ENCODE measurements at regions of chr20 and their contacts with region 1.

Region 1: GRCh38 chr20:14055127-14055742 is 59.9 kb downstream of the MACROD2 start:
- DNase-seq: peak in 1 of 2 experiments; percentile 15
- H3K4me3 ChIP-seq: no peak overlapping the region
- H3K27ac ChIP-seq: no peak overlapping the region
- H3K4me1 ChIP-seq: no peaks in the 10 kb centered on the region
- H3K27me3 ChIP-seq: no peaks in the 10 kb centered on the region
- CTCF ChIP-seq: peak; percentile 72

Region 2: DNA sequence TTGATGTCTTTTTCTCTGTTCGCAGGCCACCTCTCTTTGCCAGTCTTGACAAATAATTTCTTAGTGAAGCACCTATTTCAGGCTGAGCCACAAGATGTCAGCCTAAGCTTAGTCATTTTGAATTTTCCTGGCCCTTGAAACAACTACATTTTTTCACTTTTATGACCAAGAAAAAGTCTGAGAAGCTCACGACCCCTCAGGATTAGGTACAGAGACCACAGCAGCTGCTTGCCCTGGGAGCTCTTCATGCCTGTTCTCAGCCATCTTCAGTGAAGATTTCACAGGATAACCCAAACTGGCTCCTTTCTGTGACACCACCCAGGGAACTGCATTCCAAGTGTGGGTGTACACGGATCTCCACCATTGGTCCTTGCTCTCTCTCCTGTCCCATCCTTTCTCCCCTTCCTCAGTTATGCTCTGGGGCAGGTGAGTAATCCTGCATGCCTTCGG is 1084.8 kb before region 1 on chr20:
- CTCF ChIA-PET with region 1: no interaction called
- POLR2A ChIA-PET with region 1: no interaction called
- intact Hi-C with region 1: loop called (anchors 10 kb)
- DNase-seq: no peak
- H3K4me3 ChIP-seq: no peak overlapping the region
- H3K27ac ChIP-seq: no peak overlapping the region
- H3K4me1 ChIP-seq: no peaks in the 10 kb centered on the region
- H3K27me3 ChIP-seq: no peaks in the 10 kb centered on the region
- CTCF ChIP-seq: peak; percentile 63

Region 3: GRCh38 chr20:13119583-13119982 is 935.7 kb before region 1 on chr20:
- CTCF ChIA-PET with region 1: no interaction called
- POLR2A ChIA-PET with region 1: no interaction called
- intact Hi-C with region 1: loop called (anchors 10 kb)
- DNase-seq: peak in 1 of 2 experiments; percentile 20
- H3K4me3 ChIP-seq: no peak overlapping the region
- H3K27ac ChIP-seq: no peak overlapping the region
- H3K4me1 ChIP-seq: no peaks in the 10 kb centered on the region
- H3K27me3 ChIP-seq: no peaks in the 10 kb centered on the region
- CTCF ChIP-seq: peak; percentile 91

Region 4: DNA sequence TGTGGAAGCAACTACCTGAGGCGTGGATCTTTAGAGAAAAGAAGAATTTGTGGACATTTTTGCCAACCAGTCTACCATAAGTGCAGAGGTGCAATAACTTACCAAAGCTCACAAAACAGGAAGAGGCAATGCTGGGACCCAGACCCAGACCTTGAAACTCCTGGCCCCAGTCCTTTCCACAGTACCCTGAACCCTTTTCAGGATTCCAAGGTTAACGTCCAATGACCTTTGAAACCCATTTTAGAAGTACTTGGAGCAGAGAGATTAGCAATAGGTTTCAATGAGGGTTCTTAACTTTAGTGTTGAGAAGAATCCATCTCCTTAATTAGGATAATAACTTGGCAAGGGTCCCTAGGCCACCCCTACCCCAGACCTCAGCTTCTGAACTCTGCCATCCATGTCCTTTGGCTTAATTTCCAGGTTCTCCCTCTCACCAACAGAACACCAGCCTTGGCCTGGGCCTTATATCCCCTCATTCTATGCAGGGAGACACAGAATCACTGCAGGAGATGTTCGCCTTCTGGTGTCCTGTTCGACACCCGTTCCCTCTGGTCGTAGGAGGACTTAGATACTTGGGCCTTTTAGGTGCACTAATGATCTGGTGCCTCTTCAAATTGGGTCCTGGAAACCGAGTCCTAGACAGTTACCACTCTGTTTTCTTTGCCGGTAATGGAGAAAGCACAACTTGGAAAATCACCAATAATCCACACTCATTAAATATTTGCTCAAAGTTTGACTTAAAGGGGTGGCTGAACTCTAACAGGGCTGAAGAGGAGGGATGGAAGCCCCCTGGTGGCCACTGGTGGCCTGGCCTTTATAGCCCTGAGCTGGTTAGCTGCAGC is 793.6 kb before region 1 on chr20:
- CTCF ChIA-PET with region 1: no interaction called
- POLR2A ChIA-PET with region 1: no interaction called
- intact Hi-C with region 1: loop called (anchors 10 kb)
- DNase-seq: peak in 1 of 2 experiments; percentile 40
- H3K4me3 ChIP-seq: no peak overlapping the region
- H3K27ac ChIP-seq: no peak overlapping the region
- H3K4me1 ChIP-seq: no peaks in the 10 kb centered on the region
- H3K27me3 ChIP-seq: no peaks in the 10 kb centered on the region
- CTCF ChIP-seq: peak; percentile 84

Region 5: DNA sequence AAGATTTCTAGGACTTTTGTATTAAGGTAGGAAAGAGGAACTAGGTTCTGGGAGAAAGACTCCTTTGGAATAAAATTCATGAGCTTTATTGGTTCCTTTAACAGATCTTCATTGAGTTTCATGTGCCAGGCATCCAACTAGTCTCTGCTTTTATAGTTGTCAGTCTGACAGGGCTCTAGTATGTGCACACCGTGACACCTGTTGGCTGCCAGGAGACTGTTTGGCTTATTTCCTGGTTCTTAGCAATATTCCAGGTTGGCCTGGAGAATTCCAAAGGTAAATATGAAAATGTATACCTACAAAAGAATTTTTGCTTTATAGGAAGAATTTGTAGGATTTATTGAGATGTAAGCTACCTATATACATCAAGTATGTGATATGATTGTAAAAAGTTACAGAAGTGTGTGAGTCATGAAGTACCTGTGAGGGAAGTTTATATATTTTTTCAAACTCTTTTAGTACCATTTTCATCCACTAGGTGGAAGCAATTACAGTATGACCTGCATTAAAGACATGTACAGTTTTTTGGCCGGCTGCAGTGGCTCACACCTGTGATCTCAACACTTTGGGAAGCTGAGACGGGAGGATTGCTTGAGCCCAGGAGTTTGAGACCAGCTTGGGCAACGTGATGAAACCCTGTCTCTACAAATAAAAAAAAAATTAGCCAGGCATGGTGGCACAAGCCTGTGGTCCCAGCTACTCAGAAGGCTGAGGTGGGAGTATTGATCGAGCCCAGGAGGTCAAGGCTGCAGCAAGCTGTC is 235.2 kb before region 1 on chr20:
- CTCF ChIA-PET with region 1: no interaction called
- POLR2A ChIA-PET with region 1: no interaction called
- intact Hi-C with region 1: loop called (anchors 1 kb)
- DNase-seq: peak; percentile 16 to 74
- H3K4me3 ChIP-seq: no peak overlapping the region
- H3K27ac ChIP-seq: no peak overlapping the region
- H3K4me1 ChIP-seq: 0 out of 2 replicates have a peak, but pooled peaks cover 7% of the 10 kb centered on the region
- H3K27me3 ChIP-seq: no peaks in the 10 kb centered on the region
- CTCF ChIP-seq: peak; percentile 84

Region 6: GRCh38 chr20:13898011-13898612 is 157.1 kb before region 1 on chr20:
- CTCF ChIA-PET with region 1: no interaction called
- POLR2A ChIA-PET with region 1: no interaction called
- intact Hi-C with region 1: loop called (anchors 10 kb)
- DNase-seq: no peak
- H3K4me3 ChIP-seq: no peak overlapping the region
- H3K27ac ChIP-seq: no peak overlapping the region
- H3K4me1 ChIP-seq: no peaks in the 10 kb centered on the region
- H3K27me3 ChIP-seq: no peaks in the 10 kb centered on the region
- CTCF ChIP-seq: peak; percentile 45

Region 7: GRCh38 chr20:13915284-13915683 is 140.0 kb before region 1 on chr20:
- CTCF ChIA-PET with region 1: interaction called, 14 read pairs
- POLR2A ChIA-PET with region 1: no interaction called
- intact Hi-C with region 1: no loop called
- DNase-seq: no peak
- H3K4me3 ChIP-seq: no peak overlapping the region
- H3K27ac ChIP-seq: no peak overlapping the region
- H3K4me1 ChIP-seq: 0 out of 2 replicates have a peak, but pooled peaks cover 5% of the 10 kb centered on the region
- H3K27me3 ChIP-seq: no peaks in the 10 kb centered on the region
- CTCF ChIP-seq: no peak